CD4-positive, alpha-beta T cell (primary cell): ENCODE measurements at regions of chr2 and their contacts with region 1.

Region 1: GRCh38 chr2:63841254-63842022 is at the start of gene UGP2:
- DNase-seq: peak; percentile 70 to 92 (median 82)
- ATAC-seq: peak; percentile 64
- H3K4me3 ChIP-seq: peak within 1 kb of the TSS; percentile 99
- H3K4me3 Mint-ChIP-seq: peak within 1 kb of the TSS; percentile 99
- H3K27ac ChIP-seq: peak within 1 kb of the TSS; percentile 87
- H3K27ac Mint-ChIP-seq: peak within 1 kb of the TSS; percentile 97
- H3K4me1 ChIP-seq: peaks cover 29% of the 10 kb centered on the region
- H3K4me1 Mint-ChIP-seq: peaks cover 47% of the 10 kb centered on the region
- H3K27me3 ChIP-seq: no peaks in the 10 kb centered on the region
- H3K27me3 Mint-ChIP-seq: no peaks in the 10 kb centered on the region
- CTCF ChIP-seq: peak; percentile 15
- total RNA-seq, gene UGP2: 47.1 to 53.2 TPM

Region 2: GRCh38 chr2:62705007-62705829 is 1136.2 kb before region 1 on chr2 and contains the start of gene EHBP1:
- CTCF ChIA-PET with region 1: no interaction called
- POLR2A ChIA-PET with region 1: no interaction called
- intact Hi-C with region 1: loop called in 1 of 2 experiments (anchors 5 kb)
- DNase-seq: peak; percentile 93 to 99 (median 97)
- ATAC-seq: peak; percentile 96
- H3K4me3 ChIP-seq: peak within 1 kb of the TSS; percentile 80
- H3K4me3 Mint-ChIP-seq: peak within 1 kb of the TSS; percentile 91
- H3K27ac ChIP-seq: peak within 1 kb of the TSS in 1 of 2 donors; percentile 24
- H3K27ac Mint-ChIP-seq: peak within 1 kb of the TSS; percentile 88
- H3K4me1 ChIP-seq: peaks cover 21% of the 10 kb centered on the region
- H3K4me1 Mint-ChIP-seq: peaks cover 36% of the 10 kb centered on the region
- H3K27me3 ChIP-seq: no peaks in the 10 kb centered on the region
- H3K27me3 Mint-ChIP-seq: no peaks in the 10 kb centered on the region
- CTCF ChIP-seq: no peak
- total RNA-seq, gene EHBP1: 21.4 to 22.3 TPM

Region 3: GRCh38 chr2:63856303-63856603 is 14.8 kb after region 1 on chr2:
- CTCF ChIA-PET with region 1: interaction called, 50 read pairs
- POLR2A ChIA-PET with region 1: interaction called, 93 read pairs
- intact Hi-C with region 1: loop called (anchors 1 to 2 kb)
- DNase-seq: peak in 13 of 14 experiments; percentile 21 to 91 (median 56)
- ATAC-seq: peak; percentile 93
- H3K4me3 ChIP-seq: peak overlapping the region; percentile 8
- H3K4me3 Mint-ChIP-seq: peak overlapping the region; percentile 81
- H3K27ac ChIP-seq: peak overlapping the region; percentile 56 to 78
- H3K27ac Mint-ChIP-seq: peak overlapping the region; percentile 99
- H3K4me1 ChIP-seq: peaks cover 35% of the 10 kb centered on the region
- H3K4me1 Mint-ChIP-seq: peaks cover 67% of the 10 kb centered on the region
- H3K27me3 ChIP-seq: no peaks in the 10 kb centered on the region
- H3K27me3 Mint-ChIP-seq: no peaks in the 10 kb centered on the region
- CTCF ChIP-seq: no peak

Region 4: DNA sequence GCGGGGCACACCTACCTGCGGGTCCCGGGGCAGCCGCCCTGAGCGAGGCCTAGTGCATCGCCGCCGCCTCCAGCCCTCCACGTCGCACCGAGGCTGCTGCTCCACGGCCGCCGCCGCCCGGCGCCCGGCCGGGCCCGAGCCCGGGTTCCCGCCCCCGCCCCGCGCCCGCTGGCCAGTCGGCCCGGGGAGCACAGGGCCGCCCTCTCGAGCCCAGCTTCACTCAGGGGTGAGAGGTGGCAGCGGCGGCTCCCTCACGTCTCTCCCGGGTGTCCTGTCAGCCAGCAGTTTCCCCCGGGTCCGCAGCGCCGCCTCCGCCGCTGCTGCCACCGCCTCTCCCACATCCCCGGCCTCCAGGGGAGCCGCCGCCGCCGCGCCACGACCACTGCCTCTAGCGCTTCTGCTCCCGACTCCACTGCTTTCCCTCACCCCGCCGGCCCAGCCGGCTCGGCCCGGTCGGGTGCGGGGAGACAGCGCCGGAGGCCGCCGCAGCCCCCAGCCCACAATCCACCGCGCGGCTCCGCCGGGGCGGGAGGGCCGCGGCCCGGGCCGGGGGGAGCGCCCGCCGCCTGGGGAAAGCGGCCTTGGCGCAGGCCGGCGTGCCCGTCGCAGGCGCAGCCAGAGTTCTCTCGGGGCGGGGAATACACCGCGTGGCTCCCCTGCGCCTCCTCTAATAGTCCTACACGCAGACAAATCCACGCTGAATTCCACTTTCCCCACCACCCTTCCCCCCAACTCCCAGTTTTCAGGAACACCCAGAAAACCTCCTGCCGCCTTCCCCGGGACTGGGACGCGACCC is 177.7 kb after region 1 on chr2 and contains the start of gene VPS54:
- CTCF ChIA-PET with region 1: no interaction called
- POLR2A ChIA-PET with region 1: interaction called, 4 read pairs
- intact Hi-C with region 1: loop called in 1 of 2 experiments (anchors 10 kb)
- DNase-seq: peak; percentile 40 to 80 (median 48)
- ATAC-seq: peak; percentile 74
- H3K4me3 ChIP-seq: peak within 1 kb of the TSS; percentile 71
- H3K4me3 Mint-ChIP-seq: peak within 1 kb of the TSS; percentile 100
- H3K27ac ChIP-seq: peak within 1 kb of the TSS; percentile 35 to 54
- H3K27ac Mint-ChIP-seq: peak within 1 kb of the TSS; percentile 95
- H3K4me1 ChIP-seq: peaks cover 12% of the 10 kb centered on the region
- H3K4me1 Mint-ChIP-seq: peaks cover 46% of the 10 kb centered on the region
- H3K27me3 ChIP-seq: no peaks in the 10 kb centered on the region
- H3K27me3 Mint-ChIP-seq: no peaks in the 10 kb centered on the region
- CTCF ChIP-seq: no peak
- total RNA-seq, gene VPS54: 9.5 to 10.8 TPM

Region 5: DNA sequence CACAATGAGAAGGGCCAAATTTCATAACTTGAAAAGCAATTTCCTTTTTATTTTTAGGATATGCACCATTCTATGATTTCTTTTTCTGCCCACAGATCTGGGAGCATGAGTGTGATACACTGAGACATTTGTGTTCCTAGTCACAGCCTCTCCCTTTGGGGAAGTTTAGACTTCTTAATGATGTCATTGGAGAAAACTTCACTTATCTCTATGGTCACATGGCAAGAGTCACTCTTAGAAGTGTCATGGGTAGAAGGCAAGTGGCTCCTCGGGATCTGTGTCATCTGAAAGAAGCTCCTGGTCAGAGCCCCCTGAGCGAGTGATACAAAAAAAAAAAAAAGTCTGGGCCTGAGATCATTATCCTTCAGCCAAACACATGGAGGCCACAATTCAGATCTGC is 550.0 kb after region 1 on chr2:
- CTCF ChIA-PET with region 1: no interaction called
- POLR2A ChIA-PET with region 1: no interaction called
- intact Hi-C with region 1: no loop called
- DNase-seq: no peak
- ATAC-seq: no peak
- H3K4me3 ChIP-seq: no peak overlapping the region
- H3K4me3 Mint-ChIP-seq: no peak overlapping the region
- H3K27ac ChIP-seq: no peak overlapping the region
- H3K27ac Mint-ChIP-seq: no peak overlapping the region
- H3K4me1 ChIP-seq: no peaks in the 10 kb centered on the region
- H3K4me1 Mint-ChIP-seq: no peaks in the 10 kb centered on the region
- H3K27me3 ChIP-seq: no peaks in the 10 kb centered on the region
- H3K27me3 Mint-ChIP-seq: no peaks in the 10 kb centered on the region
- CTCF ChIP-seq: no peak

Region 6: DNA sequence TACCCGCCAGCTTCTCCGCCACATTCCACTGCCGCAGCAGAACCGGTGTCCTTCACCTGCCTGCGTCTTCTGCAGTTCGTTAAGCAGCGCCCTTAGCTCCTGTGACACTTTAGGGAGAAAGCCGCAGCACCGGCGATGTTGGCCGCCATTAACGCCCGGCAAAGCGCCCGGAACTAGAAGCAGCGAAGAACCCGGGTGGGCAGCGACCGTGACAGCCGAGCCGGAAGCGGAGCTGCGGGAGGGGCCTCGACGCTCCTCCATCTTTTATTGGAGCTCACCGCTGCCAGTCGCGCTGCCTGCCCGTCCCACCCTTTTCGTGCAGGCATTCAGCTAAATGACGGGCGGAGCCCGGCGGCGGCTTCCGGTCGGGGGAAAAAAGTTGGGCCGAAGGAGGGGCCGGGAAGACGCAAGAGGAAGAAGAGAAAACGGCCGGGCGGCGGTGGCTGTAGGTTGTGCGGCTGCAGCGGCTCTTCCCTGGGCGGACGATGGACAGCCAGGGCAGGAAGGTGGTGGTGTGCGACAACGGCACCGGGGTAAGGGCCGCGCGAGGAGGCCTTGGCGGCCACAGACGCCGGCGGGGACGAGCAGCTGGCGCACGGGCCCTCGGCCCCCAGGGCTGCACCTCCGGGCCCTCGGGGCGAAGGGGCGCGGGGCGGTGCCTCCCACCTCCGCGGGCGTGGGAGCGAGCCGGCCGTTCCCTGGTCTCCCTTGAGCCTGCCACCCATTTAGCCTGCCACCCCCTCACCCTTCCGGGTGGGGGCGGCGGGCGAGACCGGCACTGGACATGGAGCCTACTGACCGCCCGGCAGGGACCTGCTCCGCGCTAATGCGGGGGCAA is 1386.2 kb after region 1 on chr2 and contains the start of gene ACTR2:
- CTCF ChIA-PET with region 1: no interaction called
- POLR2A ChIA-PET with region 1: interaction called, 5 read pairs
- intact Hi-C with region 1: loop called in 1 of 2 experiments (anchors 5 kb)
- DNase-seq: peak; percentile 87 to 98 (median 92)
- ATAC-seq: peak; percentile 93
- H3K4me3 ChIP-seq: peak within 1 kb of the TSS; percentile 76
- H3K4me3 Mint-ChIP-seq: peak within 1 kb of the TSS; percentile 100
- H3K27ac ChIP-seq: peak within 1 kb of the TSS; percentile 97 to 98
- H3K27ac Mint-ChIP-seq: peak within 1 kb of the TSS; percentile 98
- H3K4me1 ChIP-seq: peaks cover 35% of the 10 kb centered on the region
- H3K4me1 Mint-ChIP-seq: peaks cover 53% of the 10 kb centered on the region
- H3K27me3 ChIP-seq: no peaks in the 10 kb centered on the region
- H3K27me3 Mint-ChIP-seq: no peaks in the 10 kb centered on the region
- CTCF ChIP-seq: no peak
- total RNA-seq, gene ACTR2: 128 to 130 TPM